ENCODE measurements at regions of chr3 and their contacts with region 1.

Region 1: GRCh38 chr3:184561061-184561912 is at the start of gene EPHB3:
- DNase-seq: peak; percentile 99
- H3K4me3 ChIP-seq: peak within 1 kb of the TSS; percentile 67
- H3K27ac ChIP-seq: no peak within 1 kb of the TSS
- H3K27me3 ChIP-seq: peaks cover 32% of the 10 kb centered on the region
- CTCF ChIP-seq: peak; percentile 100
- polyA plus RNA-seq, gene EPHB3: 1.9 TPM in 2 replicates

Region 2: DNA sequence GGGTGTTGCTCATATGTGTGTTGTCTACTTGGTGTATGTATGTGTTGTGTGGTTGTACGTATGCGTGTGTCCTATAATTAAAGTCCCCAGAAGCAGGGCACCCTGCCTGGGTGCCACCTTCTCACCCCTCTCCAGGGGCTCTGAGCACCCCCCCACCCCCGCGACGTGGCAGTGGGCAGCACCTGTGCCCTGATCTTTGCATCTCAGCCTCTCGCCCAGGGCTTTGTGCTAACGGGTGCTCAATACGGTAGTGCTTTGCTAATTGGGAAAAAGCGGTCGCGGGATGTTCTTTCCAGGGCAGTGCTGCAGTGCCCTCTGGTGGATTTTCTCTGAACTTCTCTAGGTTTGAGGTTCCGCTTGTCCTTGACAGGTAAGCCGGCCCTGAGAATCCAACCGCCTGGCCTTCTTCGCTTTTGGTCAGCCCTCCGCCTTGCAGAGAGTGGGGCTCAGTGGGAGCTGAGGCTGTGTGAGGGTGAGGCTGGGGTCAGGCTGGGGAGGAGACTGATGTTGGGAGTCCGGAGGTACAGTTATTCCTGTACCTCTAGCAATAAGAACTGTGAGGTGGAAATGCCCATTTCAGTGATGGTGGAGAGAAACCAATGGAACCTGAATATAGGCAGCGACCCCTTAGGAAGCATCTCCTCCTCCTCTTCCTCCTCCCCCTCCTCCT is 17.3 kb before region 1 on chr3:
- CTCF ChIA-PET with region 1: interaction called, 16 read pairs
- POLR2A ChIA-PET with region 1: no interaction called
- DNase-seq: peak; percentile 56
- H3K4me3 ChIP-seq: no peak overlapping the region
- H3K27ac ChIP-seq: no peak overlapping the region
- H3K27me3 ChIP-seq: peaks cover 28% of the 10 kb centered on the region
- CTCF ChIP-seq: peak; percentile 89

Region 3: GRCh38 chr3:184711493-184712247 is 150.4 kb after region 1 on chr3 and contains the start of gene MAGEF1:
- CTCF ChIA-PET with region 1: interaction called, 14 read pairs
- POLR2A ChIA-PET with region 1: interaction called, 11 read pairs
- DNase-seq: peak; percentile 48
- H3K4me3 ChIP-seq: peak within 1 kb of the TSS; percentile 81
- H3K27ac ChIP-seq: peak within 1 kb of the TSS; percentile 89
- H3K27me3 ChIP-seq: no peaks in the 10 kb centered on the region
- CTCF ChIP-seq: no peak
- polyA plus RNA-seq, gene MAGEF1: 19.8 and 23.4 TPM in 2 replicates

Region 4: GRCh38 chr3:184737641-184738535 is 176.6 kb after region 1 on chr3:
- CTCF ChIA-PET with region 1: interaction called, 35 read pairs
- POLR2A ChIA-PET with region 1: no interaction called
- DNase-seq: no peak
- H3K4me3 ChIP-seq: no peak overlapping the region
- H3K27ac ChIP-seq: no peak overlapping the region
- H3K27me3 ChIP-seq: peaks cover 6% of the 10 kb centered on the region
- CTCF ChIP-seq: no peak

Region 5: DNA sequence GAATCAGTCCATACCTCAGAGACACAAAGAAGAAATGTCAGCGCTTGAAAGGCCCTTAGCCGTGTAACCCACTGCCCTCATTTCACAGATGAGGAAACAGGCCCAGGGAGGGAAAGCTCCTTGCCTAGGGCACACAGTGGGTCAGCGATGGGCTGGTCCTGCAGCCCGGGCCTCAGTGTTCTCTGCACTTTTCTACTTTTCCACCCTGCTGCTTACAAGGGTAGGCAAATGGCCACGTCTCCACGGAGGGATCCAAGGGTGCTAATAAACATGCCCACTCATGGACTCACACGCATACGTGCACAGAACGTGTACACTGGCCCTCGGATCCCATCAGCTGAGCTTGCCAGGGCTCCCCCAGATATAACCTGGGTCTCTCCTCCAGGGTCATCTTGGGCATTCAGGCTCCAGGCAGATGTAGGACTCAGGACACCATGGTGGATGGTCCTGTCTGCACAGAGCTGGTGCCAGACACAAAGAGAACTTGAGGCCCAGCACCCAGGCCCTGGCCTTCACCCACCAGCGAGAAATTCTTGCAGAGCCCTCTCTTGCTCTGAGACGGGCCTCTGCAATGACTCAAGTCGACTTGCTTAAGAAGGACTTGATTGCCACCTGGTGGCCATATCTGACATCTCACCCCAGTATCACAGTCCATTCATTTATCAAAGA is 216.2 kb after region 1 on chr3:
- CTCF ChIA-PET with region 1: interaction called, 14 read pairs
- POLR2A ChIA-PET with region 1: interaction called, 24 read pairs
- DNase-seq: peak; percentile 95
- H3K4me3 ChIP-seq: no peak overlapping the region
- H3K27ac ChIP-seq: no peak overlapping the region
- H3K27me3 ChIP-seq: no peaks in the 10 kb centered on the region
- CTCF ChIP-seq: peak; percentile 75

Region 6: GRCh38 chr3:184800349-184800930 is 239.2 kb after region 1 on chr3:
- CTCF ChIA-PET with region 1: interaction called, 19 read pairs
- POLR2A ChIA-PET with region 1: interaction called, 9 read pairs
- DNase-seq: no peak
- H3K4me3 ChIP-seq: no peak overlapping the region
- H3K27ac ChIP-seq: no peak overlapping the region
- H3K27me3 ChIP-seq: peaks cover 6% of the 10 kb centered on the region
- CTCF ChIP-seq: no peak

Measured in AG04450 (cell line).